T-cell (primary cell): ENCODE measurements at regions of chr9 and their contacts with region 1.

Region 1: DNA sequence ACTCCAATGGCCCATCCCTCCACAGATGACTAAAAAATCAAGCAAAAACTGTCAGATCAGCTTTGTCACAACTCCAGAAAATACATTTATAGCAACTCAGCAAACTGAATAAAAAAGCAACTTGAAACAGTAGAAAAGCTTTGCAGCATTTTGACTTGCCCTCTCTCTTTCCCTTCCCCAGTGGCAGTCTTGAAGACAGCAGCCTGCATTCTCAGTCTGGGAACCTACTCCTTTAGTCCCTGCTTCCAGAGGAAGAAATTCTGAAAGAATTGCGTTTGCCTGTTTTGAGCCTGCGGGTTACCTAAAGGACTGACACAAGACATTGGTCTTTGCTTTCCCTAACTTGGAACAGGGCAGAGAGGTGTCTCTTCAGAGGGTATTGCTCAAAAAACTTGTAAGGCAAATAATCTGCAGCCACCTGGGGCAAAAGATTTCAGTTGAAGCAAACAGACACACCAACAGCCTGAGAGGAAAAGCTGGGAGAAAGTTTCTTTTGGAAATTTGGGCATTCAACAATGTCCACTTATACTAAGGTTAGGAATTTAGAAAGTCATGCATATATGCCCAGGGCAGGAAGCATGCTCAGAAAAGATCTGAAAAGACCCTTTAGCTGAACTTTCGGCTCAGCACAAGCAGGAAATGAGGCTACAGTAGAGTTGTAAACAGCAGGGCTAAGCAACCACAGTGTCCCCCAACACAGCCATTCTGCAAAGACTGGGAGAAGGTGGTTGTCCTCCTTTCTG is 15.2 kb upstream of the SLC35D2 start:
- DNase-seq: peak in 9 of 35 experiments; percentile 8 to 49 (median 20)
- ATAC-seq: peak; percentile 90 to 97 (median 94)
- H3K4me3 ChIP-seq: no peak overlapping the region
- H3K4me3 Mint-ChIP-seq: peak overlapping the region; percentile 21 to 51 (median 29)
- H3K27ac ChIP-seq: peak overlapping the region; percentile 83
- H3K27ac Mint-ChIP-seq: peak overlapping the region; percentile 94 to 97
- H3K4me1 ChIP-seq: peaks cover 12 to 18% of the 10 kb centered on the region in 2 experiments
- H3K4me1 Mint-ChIP-seq: peaks cover 25 to 30% (median 27%) of the 10 kb centered on the region in 3 donors
- H3K27me3 ChIP-seq: no peaks in the 10 kb centered on the region
- H3K27me3 Mint-ChIP-seq: no peaks in the 10 kb centered on the region

Region 2: GRCh38 chr9:96418810-96419516 is 20.2 kb after region 1 on chr9:
- CTCF ChIA-PET with region 1: no interaction called
- POLR2A ChIA-PET with region 1: no interaction called
- DNase-seq: peak in 24 of 35 experiments; percentile 4 to 68 (median 18)
- ATAC-seq: peak; percentile 18 to 45 (median 32)
- H3K4me3 ChIP-seq: peak overlapping the region; percentile 74 to 75
- H3K4me3 Mint-ChIP-seq: peak overlapping the region; percentile 85 to 89 (median 88)
- H3K27ac ChIP-seq: peak overlapping the region; percentile 79
- H3K27ac Mint-ChIP-seq: peak overlapping the region; percentile 89 to 91
- H3K4me1 ChIP-seq: peaks cover 6 to 29% of the 10 kb centered on the region in 2 experiments
- H3K4me1 Mint-ChIP-seq: peaks cover 22 to 37% (median 28%) of the 10 kb centered on the region in 3 donors
- H3K27me3 ChIP-seq: no peaks in the 10 kb centered on the region
- H3K27me3 Mint-ChIP-seq: no peaks in the 10 kb centered on the region

Region 3: DNA sequence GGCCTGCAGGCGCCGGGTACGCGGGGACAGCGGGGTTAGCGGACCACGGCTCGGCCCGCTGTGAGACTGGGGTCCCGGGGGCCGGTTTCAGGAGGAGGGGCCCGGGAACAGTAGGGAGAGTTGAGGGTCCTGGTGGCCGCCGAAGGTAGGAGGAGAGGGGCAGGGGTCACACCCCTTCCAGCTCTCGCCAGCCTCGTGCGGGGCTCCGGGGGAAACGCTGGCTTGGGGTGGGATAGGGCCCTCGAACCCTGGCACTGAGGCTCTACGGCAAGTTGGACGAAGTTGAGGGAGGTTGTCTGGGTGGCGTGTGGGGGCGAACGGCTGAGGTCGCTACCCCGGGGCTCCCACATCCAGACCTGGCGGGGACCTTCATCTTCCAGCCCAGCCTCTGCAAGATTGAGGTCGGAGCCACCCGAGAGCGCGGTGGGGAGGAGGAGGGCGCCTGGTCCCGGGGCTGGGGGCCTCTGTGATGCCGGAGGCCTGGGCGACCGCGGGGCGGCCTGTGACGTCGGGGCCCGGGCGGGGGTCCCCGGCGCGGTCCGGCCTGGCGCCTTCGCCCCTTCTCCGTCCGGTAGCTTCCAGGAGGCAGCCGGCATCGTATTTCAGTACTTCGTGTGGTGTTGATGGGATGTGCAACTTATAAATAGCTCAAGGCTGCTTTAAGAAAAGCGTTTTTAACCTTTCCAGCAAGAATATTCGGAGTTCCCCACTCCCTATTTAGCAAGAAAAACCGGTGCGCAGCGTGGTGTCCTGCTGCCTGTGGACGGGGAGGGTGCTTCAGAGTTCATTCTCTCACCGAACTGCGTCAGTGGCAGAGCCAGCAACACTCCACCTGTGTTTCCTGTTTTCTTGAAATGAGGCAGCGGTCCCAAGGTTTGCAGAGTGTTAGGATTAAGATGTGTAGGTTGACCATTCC is 52.1 kb after region 1 on chr9:
- CTCF ChIA-PET with region 1: no interaction called
- POLR2A ChIA-PET with region 1: interaction called in 1 of 2 experiments, 10 read pairs
- DNase-seq: peak; percentile 22 to 79 (median 62)
- ATAC-seq: peak in 1 of 4 experiments; percentile 46
- H3K4me3 ChIP-seq: peak overlapping the region; percentile 71 to 89
- H3K4me3 Mint-ChIP-seq: peak overlapping the region; percentile 91 to 94 (median 94)
- H3K27ac ChIP-seq: peak overlapping the region; percentile 47
- H3K27ac Mint-ChIP-seq: peak overlapping the region; percentile 88 to 93
- H3K4me1 ChIP-seq: peaks cover 0 to 16% of the 10 kb centered on the region in 2 experiments
- H3K4me1 Mint-ChIP-seq: peaks cover 28 to 35% (median 29%) of the 10 kb centered on the region in 3 donors
- H3K27me3 ChIP-seq: no peaks in the 10 kb centered on the region
- H3K27me3 Mint-ChIP-seq: peaks cover 0 to 4% of the 10 kb centered on the region in 2 donors